Heart left ventricle (tissue), 16 donors: ENCODE measurements at regions of chr18 and their contacts with region 1.

Region 1: DNA sequence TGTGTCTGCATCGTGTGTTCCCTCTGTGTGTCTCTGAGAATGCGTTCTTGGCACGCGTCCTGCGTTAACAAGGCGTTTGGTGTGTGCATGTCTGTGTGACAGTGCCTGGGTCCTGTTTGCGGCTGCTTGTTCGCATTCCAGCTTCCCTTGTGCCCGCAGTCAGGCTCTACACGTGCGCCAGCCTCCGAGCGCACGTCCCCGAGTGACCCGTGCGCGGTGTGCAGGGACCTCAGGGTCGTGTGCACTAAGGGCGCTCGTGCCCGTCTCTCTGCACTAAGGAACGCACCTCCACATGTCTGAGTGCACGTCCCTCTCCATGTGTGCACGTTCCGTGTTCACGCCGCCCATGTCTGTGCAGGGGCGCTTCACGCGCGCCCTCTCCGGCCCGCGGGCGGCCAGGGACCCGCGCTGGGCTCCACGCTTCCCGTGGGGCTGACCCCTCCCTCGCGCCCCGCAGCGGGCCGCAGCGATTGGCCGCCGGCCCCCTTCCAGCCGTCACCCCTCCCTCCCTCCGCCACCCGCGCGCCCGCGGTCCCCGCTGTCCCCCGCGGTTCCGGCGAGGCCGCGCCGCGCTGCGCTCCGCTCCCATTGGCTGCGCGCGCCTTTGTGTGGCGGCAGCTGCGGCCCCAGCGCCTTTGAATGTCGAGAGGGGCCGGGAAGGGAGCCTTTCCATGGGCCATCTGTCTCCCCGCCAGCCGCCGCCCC is 229.4 kb downstream of the HAUS1 start:
- DNase-seq: peak; percentile 41 to 79 (median 49)
- ATAC-seq: peak; percentile 52 to 87 (median 78)
- H3K4me3 ChIP-seq: peak overlapping the region; percentile 58 to 84 (median 68)
- H3K27ac ChIP-seq: peak overlapping the region in 7 of 12 donors; percentile 1 to 75 (median 50)
- H3K4me1 ChIP-seq: peaks cover 3 to 40% (median 35%) of the 10 kb centered on the region in 12 donors
- H3K27me3 ChIP-seq: peaks cover 0 to 35% (median 0%) of the 10 kb centered on the region in 9 donors
- CTCF ChIP-seq: no peak
- POLR2A ChIP-seq: no peak

Region 2: GRCh38 chr18:46281185-46282176 is 52.1 kb before region 1 on chr18:
- intact Hi-C with region 1: no loop called
- DNase-seq: peak; percentile 57 to 76 (median 63)
- ATAC-seq: peak; percentile 80 to 94 (median 84)
- H3K4me3 ChIP-seq: no peak overlapping the region
- H3K27ac ChIP-seq: no peak overlapping the region
- H3K4me1 ChIP-seq: peaks cover 0 to 19% (median 9%) of the 10 kb centered on the region in 12 donors
- H3K27me3 ChIP-seq: no peaks in the 10 kb centered on the region
- CTCF ChIP-seq: peak; percentile 84 to 98 (median 94)
- POLR2A ChIP-seq: no peak

Region 3: DNA sequence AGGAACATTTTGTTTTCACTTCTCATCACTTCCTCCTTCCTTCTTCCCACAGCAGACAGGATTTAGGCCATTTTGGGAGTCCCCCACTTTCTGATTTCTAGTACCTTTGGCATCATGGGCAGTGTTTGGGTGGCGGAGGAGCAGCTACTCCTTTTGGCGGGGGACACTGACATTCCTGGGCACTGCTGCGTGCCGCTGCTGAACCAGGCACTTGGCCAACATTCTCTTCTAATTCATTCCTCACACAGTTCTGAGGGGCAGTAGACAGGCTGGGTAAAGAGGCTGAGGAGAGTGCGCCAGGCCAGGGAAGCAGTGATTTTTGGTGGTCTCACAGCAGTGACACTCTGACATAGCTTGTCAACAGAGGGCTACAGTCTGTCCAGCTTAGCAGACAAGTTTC is 53.2 kb after region 1 on chr18:
- intact Hi-C with region 1: loop called in 1 of 10 experiments (anchors 2 kb)
- DNase-seq: peak in 4 of 5 donors; percentile 46 to 77 (median 56)
- ATAC-seq: peak; percentile 79 to 93 (median 92)
- H3K4me3 ChIP-seq: no peak overlapping the region
- H3K27ac ChIP-seq: peak overlapping the region in 8 of 12 donors; percentile 33 to 65 (median 54)
- H3K4me1 ChIP-seq: peaks cover 0 to 33% (median 21%) of the 10 kb centered on the region in 12 donors
- H3K27me3 ChIP-seq: no peaks in the 10 kb centered on the region
- CTCF ChIP-seq: no peak
- POLR2A ChIP-seq: no peak

Region 4: DNA sequence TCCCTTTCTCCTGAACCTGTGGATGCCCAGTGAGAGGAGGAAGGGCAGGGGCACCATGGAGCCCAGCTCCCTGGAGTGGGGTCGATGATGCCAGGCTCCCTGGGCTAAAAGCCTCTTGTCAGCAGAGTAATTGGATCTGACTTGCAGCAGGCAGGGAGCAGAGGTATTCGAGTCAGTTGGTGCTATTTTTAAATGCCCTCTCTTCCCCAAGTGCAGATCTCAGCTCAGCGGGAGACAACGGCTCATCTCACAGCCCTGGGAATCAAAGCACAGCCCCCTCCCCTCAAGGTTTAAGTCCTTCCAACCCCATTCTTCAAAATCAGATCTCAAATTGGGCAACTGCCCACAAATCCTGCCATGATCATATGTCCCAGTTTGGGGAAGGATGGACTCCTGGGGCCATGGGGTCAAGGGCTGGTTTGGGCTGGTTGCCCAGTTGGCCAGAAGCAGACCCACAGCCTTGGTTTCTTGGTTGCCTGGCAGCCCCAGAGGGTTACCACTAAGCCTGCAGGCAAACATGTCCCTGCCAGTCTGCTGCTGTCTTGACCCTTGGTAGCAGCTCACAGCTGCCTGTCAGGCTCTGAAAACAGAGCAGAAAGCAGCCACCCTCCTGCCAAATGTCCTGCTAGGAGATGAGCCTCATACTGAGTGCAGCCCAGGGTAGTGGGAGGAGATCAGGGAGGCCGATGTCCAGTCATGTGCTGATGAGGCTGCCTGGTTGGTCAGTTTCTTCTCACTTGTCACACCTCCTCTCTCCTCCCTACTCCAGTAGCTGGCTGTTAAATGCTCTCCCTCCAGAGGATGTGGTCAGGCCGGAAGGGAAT is 78.5 kb after region 1 on chr18:
- intact Hi-C with region 1: loop called in 9 of 10 experiments (anchors 5 to 10 kb)
- DNase-seq: peak in 4 of 5 donors; percentile 58 to 71 (median 62)
- ATAC-seq: peak; percentile 73 to 82 (median 76)
- H3K4me3 ChIP-seq: peak overlapping the region in 2 of 12 donors; percentile 9 to 22
- H3K27ac ChIP-seq: peak overlapping the region; percentile 35 to 98 (median 82)
- H3K4me1 ChIP-seq: peaks cover 4 to 91% (median 45%) of the 10 kb centered on the region in 12 donors
- H3K27me3 ChIP-seq: no peaks in the 10 kb centered on the region
- CTCF ChIP-seq: no peak
- POLR2A ChIP-seq: no peak

Region 5: GRCh38 chr18:46481048-46481846 is 147.7 kb after region 1 on chr18:
- intact Hi-C with region 1: loop called in 1 of 10 experiments (anchors 2 kb)
- DNase-seq: peak in 2 of 5 donors; percentile 26 to 45
- ATAC-seq: peak in 2 of 4 donors; percentile 53 to 61
- H3K4me3 ChIP-seq: no peak overlapping the region
- H3K27ac ChIP-seq: no peak overlapping the region
- H3K4me1 ChIP-seq: peaks cover 0 to 10% (median 0%) of the 10 kb centered on the region in 12 donors
- H3K27me3 ChIP-seq: no peaks in the 10 kb centered on the region
- CTCF ChIP-seq: peak; percentile 59 to 81 (median 70)
- POLR2A ChIP-seq: no peak

Region 6: DNA sequence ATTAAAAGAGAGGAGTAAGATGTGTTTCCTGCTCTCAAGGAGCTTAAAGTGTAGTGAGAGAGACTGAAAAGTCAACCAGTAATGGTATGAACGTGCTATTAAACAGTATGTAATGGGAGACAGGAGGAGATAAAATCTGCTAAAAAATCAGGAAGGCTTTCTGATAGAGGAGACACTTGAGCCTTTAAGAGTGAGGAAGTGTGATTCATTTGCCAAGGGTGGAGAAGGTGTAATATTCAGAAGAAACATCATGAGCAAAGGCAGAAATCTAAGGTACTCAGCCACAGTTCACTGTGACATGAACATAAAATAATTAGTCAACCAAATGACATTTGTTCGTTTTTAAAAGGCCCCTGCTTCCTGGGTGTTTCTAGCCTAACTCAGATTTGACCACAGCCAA is 1055.6 kb after region 1 on chr18:
- intact Hi-C with region 1: no loop called
- DNase-seq: no peak
- ATAC-seq: no peak
- H3K4me3 ChIP-seq: no peak overlapping the region
- H3K27ac ChIP-seq: no peak overlapping the region
- H3K4me1 ChIP-seq: peaks cover 0 to 6% (median 0%) of the 10 kb centered on the region in 12 donors
- H3K27me3 ChIP-seq: no peaks in the 10 kb centered on the region
- CTCF ChIP-seq: no peak
- POLR2A ChIP-seq: no peak